Ovary (tissue), 10 donors: ENCODE measurements at regions of chr9 and their contacts with region 1.

Region 1: DNA sequence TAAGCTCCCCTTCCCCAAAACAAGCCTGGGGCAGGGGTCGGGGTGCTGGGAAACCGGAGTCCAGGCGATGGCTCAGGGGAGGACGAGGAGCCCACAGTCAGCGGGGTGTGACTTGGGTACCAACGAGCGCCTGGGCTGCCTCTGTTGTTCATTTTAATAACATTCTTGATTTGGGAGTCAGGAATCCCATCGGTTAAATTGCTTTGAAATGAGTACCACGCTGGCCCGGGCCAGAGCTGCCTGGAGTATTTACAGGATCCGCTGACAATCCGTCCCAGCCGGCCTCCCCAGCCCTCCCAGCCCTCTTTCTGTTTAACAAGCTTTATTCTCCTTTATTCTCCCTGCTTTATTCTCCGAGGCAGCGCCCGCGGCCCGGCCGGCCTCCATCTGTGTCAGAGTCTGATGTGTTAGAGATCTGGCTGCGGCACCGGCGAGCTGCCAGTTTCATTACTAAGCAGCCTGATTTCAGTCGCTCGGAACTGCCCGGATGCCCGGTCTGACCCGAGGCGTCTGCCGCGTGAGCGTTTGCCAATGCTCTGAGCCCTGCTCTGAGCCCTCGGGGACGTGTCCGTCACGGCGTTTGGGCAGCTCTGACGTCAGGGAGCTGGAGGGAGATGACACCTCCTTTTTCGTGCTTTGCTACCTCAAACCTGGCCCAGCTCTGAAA is 16.5 kb upstream of the QRFP start:
- DNase-seq: no peak
- H3K4me3 ChIP-seq: no peak overlapping the region
- H3K27ac ChIP-seq: no peak overlapping the region
- H3K4me1 ChIP-seq: no peaks in the 10 kb centered on the region
- H3K27me3 ChIP-seq: no peaks in the 10 kb centered on the region
- CTCF ChIP-seq: no peak
- EP300 ChIP-seq: no peak
- POLR2A ChIP-seq: no peak

Region 2: DNA sequence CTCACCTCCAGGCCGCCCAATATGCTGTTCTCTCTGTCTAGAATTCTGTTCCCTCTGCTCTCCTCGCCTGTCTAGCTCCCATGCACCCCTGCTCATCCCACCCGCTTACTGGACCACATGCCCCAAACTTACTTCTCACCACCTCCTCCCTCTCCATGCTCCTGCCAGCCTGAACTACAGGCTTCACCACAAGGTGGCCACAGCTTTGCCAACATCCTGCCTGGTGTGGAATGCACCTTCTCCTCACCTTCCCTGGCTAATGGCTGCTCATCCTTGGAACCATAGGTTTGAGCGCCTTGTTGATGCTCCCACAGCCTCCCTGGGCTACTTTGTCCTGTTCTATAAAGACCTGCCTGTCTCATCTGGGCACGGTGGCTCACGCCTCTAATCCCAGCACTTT is 105.6 kb after region 1 on chr9:
- intact Hi-C with region 1: loop called in 1 of 4 experiments (anchors 5 kb)
- DNase-seq: no peak
- H3K4me3 ChIP-seq: no peak overlapping the region
- H3K27ac ChIP-seq: no peak overlapping the region
- H3K4me1 ChIP-seq: peaks cover 3% of the 10 kb centered on the region
- H3K27me3 ChIP-seq: no peaks in the 10 kb centered on the region
- CTCF ChIP-seq: no peak
- EP300 ChIP-seq: no peak
- POLR2A ChIP-seq: no peak